ENCODE measurements at regions of chr11 and their contacts with region 1.

Region 1: GRCh38 chr11:62556108-62556871 is 9.7 kb upstream of the AHNAK start:
- DNase-seq: peak; percentile 87
- H3K4me3 Mint-ChIP-seq: peak overlapping the region; percentile 73
- H3K27ac Mint-ChIP-seq: peak overlapping the region; percentile 99
- H3K4me1 Mint-ChIP-seq: peaks cover 93% of the 10 kb centered on the region
- H3K27me3 Mint-ChIP-seq: no peaks in the 10 kb centered on the region

Region 2: DNA sequence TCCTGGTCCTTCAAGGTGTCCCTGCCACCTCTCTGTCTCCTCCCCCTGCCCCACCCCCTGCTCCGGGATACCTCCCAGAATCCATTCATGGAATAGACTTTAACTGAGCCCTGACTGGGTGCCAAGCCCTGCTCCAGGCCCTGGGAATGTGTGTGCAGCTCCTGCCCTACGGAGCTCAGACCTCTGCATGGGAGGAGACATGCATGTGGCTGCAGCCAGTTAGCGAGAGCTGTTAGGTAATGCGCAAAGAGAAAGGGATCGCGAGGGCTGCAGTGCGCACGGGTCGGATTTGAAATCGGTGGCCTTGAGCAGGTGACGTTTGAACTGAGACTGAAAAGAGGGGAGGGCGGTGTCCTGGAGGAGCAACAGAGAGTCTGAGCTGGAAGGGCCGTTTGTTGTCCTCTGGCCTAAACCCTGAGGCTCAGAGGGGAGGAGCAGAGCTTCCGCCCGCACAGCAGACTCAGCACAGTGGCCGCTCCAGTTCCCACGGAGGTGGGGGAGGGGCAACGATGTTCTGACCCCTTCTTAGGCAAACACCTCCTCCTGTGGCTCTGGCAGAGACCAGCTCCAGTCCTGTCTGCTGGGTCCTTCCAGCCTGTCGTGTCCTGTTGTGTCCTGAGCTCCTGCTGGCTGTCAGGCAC is 1067.5 kb before region 1 on chr11:
- intact Hi-C with region 1: no loop called
- DNase-seq: no peak
- H3K4me3 Mint-ChIP-seq: no peak overlapping the region
- H3K27ac Mint-ChIP-seq: no peak overlapping the region
- H3K4me1 Mint-ChIP-seq: no peaks in the 10 kb centered on the region
- H3K27me3 Mint-ChIP-seq: no peaks in the 10 kb centered on the region

Region 3: GRCh38 chr11:62394825-62395538 is 161.3 kb before region 1 on chr11:
- intact Hi-C with region 1: loop called (anchors 1 kb)
- DNase-seq: peak; percentile 48
- H3K4me3 Mint-ChIP-seq: no peak overlapping the region
- H3K27ac Mint-ChIP-seq: no peak overlapping the region
- H3K4me1 Mint-ChIP-seq: peaks cover 8% of the 10 kb centered on the region
- H3K27me3 Mint-ChIP-seq: peaks cover 2% of the 10 kb centered on the region

Region 4: DNA sequence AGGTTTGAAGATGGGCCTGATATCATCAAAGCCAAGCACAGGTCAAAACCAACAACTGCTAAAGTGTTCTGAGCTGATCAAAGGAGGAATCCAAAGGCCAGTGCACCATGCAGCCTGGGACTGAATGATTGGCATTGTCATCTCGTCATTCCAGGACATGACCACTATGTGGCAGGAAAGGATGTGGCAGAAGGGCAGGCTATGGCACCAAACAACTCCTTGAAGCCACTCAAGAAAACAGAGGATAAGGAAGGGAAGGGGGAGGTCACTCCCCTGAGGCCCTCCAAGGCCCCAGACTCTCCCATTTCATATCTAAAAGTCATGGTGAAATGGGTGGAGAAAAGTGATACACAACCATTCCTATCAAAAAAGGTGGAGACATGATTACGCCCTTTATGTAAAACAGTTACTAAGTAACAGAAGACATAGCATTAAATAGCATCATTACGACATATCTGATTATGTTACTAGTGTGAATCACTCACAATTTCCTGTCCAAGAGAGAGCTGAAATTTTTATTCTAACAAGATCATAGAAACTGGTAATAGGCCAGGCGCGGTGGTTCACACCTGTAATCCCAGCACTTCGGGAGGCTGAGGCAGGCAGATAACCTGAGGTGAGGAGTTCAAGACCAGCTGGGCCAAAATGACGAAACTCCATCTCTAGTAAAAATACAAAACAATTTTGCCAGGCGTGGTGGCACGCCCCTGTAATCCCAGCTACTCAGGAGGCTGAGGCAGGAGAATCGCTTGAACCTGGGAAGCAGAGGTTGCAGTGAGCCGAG is 59.0 kb before region 1 on chr11:
- intact Hi-C with region 1: loop called (anchors 1 kb)
- DNase-seq: no peak
- H3K4me3 Mint-ChIP-seq: no peak overlapping the region
- H3K27ac Mint-ChIP-seq: no peak overlapping the region
- H3K4me1 Mint-ChIP-seq: no peaks in the 10 kb centered on the region
- H3K27me3 Mint-ChIP-seq: peaks cover 19% of the 10 kb centered on the region

Region 5: GRCh38 chr11:62573592-62574362 is 17.5 kb after region 1 on chr11 and contains the start of gene EEF1G:
- intact Hi-C with region 1: loop called (anchors 1 kb)
- DNase-seq: peak; percentile 99
- H3K4me3 Mint-ChIP-seq: peak within 1 kb of the TSS; percentile 98
- H3K27ac Mint-ChIP-seq: peak within 1 kb of the TSS; percentile 92
- H3K4me1 Mint-ChIP-seq: peaks cover 37% of the 10 kb centered on the region
- H3K27me3 Mint-ChIP-seq: no peaks in the 10 kb centered on the region
- total RNA-seq, gene EEF1G: 1,154 and 1,169 TPM in 2 replicates

Region 6: DNA sequence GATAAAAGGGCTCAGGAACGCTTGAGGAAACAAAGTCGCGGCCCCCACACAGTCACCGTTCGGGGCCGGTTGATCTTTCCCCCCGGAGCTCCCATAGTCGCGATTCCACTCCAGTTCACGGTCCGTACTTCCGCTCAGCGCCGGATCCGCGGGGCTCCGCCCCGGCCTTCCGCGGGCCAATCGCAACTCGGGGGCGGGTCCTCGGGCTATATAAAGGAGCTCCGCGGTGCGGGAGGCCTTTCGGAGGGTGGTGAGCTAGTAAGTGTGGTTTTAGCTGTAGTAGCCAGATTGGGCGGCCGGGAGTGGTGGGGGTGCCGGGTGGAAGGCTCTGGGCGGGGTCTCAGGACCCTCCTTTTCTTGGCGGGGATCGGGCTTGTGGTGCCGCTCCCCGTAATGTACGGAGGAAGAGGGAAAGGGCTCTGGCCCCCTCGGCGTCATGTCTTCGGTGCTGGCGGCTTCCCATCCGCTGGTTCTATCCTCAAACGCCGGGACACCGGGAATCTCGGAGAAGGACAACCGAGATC is 108.8 kb after region 1 on chr11 and contains the starts of genes C11orf98 and CSKMT:
- intact Hi-C with region 1: loop called (anchors 2 kb)
- DNase-seq: peak; percentile 97
- H3K4me3 Mint-ChIP-seq: peak within 1 kb of the TSS; percentile 98
- H3K27ac Mint-ChIP-seq: peak within 1 kb of the TSS; percentile 81
- H3K4me1 Mint-ChIP-seq: peaks cover 33% of the 10 kb centered on the region
- H3K27me3 Mint-ChIP-seq: no peaks in the 10 kb centered on the region
- total RNA-seq, gene C11orf98: 146 and 151 TPM in 2 replicates
- total RNA-seq, gene CSKMT: 65.0 and 69.4 TPM in 2 replicates

Region 7: DNA sequence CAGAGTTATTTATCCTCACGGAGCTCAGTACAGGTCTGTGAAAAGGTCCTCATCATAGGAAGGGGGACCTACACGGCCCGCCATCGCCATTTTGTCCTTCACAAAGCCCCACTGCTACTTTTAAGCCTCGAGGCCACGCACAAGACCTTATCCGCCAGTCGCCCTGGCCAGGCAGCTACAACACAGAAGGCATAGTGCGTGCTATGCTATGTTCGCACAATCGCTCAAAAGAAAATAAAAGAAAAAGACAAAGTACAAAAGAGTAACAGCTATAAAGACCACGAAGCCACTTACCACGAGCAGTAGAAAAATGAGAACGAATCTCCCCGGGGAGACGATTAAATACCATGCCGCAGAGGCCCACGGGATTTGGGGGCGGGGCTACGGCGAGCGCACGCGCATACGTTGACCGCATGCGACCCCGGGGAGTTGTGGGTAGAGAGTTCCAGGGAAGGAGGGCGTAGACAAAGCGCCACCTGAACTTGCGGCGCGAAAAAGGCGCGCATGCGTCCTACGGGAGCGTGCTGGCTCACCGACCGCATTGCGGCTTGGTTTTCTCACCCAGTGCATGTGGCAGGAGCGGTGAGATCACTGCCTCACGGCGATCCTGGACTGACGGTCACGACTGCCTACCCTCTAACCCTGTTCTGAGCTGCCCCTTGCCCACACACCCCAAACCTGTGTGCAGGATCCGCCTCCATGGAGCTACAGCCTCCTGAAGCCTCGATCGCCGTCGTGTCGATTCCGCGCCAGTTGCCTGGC is 299.5 kb after region 1 on chr11:
- intact Hi-C with region 1: loop called (anchors 5 kb)
- DNase-seq: peak; percentile 99
- H3K4me3 Mint-ChIP-seq: peak overlapping the region; percentile 98
- H3K27ac Mint-ChIP-seq: peak overlapping the region; percentile 98
- H3K4me1 Mint-ChIP-seq: peaks cover 71% of the 10 kb centered on the region
- H3K27me3 Mint-ChIP-seq: peaks cover 5% of the 10 kb centered on the region

Region 8: DNA sequence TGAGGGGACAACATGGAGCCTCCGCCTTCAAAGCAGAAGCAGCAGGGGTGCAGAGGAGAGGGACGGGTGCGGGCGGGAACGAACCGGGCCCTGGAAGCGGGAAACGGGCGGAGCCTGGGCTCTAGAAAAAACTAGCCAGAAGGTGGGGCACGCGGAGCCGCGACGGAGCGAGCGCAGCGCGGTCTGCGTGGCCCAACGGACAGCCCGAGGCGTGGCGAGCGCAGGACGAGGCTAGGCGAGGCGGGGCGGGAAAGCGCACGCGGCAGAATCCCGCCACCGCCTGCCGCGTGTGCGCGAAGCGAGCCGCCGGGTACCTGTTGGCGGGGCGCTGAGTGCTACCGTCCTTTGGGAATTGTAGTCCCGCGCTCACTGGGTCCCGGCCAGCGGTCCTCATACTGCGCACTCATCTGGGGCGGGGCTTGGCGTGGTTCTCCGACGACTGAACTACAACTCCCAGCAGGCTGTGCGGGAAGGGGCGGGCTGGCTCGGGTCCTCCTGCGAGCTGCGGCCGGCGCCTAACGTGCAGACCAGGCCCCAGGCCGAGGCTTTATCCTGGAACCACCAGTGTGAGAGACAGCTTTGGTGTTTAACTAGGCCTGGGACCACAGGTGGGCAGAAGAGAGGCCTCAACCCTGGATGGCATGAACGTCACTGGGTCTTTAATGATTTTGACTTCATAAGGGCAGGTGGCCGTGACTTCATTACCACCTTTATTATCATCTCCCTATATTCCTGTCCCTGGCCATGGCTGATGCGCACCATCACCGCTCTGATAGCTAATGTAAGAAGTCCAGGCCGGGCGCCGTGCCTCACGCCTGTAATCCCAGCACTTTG is 1115.2 kb after region 1 on chr11 and contains the start of gene ATL3:
- intact Hi-C with region 1: loop called (anchors 5 kb)
- DNase-seq: peak; percentile 91
- H3K4me3 Mint-ChIP-seq: peak within 1 kb of the TSS; percentile 92
- H3K27ac Mint-ChIP-seq: peak within 1 kb of the TSS; percentile 81
- H3K4me1 Mint-ChIP-seq: peaks cover 25% of the 10 kb centered on the region
- H3K27me3 Mint-ChIP-seq: no peaks in the 10 kb centered on the region
- total RNA-seq, gene ATL3: 35.6 and 37.0 TPM in 2 replicates

Measured in activated T-helper 1 cell treated with anti-CD3 and anti-CD28 coated beads, Interleukin-12 subunit alpha, Interleukin-12 subunit beta, Interleukin-2, Interleukin-4 antibody, amounts not matched to agents 30 ng/mL and 10 ng/mL and 1 ng/mL, durations not matched to agents 14 hours and 24 hours and 36 hours (primary cell).